Gastrocnemius medialis (tissue), 4 donors: ENCODE measurements at regions of chr12 and their contacts with region 1.

Region 1: DNA sequence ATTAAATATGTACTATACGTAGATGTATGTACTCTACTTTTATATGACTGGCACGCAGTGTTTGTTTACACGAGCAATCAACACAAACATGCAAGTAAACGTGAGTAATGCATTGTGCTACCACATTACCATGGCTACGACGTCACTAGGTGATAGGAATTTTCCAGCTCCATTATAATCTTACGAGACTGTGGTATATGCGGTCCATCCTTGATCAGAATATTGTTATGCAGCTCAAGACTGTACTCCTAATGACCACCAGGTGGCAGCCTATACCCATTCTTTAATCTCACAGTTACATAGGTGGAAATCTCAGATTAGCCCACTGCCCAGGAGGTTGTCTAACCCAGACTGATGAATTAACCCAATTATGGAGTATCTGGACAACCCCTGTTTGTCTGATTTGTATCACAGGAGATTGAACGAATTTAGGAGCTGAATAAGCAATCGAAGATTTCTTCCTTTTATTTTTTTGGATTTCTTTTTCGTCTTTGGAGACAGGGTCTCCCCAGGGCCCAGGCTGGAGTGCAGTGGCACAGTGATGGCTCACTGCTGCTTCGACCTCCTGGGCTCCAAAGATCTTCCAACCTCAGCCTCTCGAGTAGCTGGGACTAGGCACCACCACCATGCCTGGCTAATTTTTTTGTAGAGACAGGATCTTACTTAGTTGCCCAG is 8.7 kb upstream of the TESPA1 start:
- DNase-seq: peak in 1 of 2 donors; percentile 15
- ATAC-seq: peak; percentile 77 to 78
- H3K4me3 ChIP-seq: no peak overlapping the region
- H3K27ac ChIP-seq: no peak overlapping the region
- H3K4me1 ChIP-seq: peaks cover 0 to 4% of the 10 kb centered on the region in 2 donors
- H3K27me3 ChIP-seq: no peaks in the 10 kb centered on the region
- CTCF ChIP-seq: peak; percentile 72 to 87 (median 81)
- POLR2A ChIP-seq: no peak

Region 2: GRCh38 chr12:55073043-55074022 is 80.0 kb after region 1 on chr12:
- in situ Hi-C with region 1: loop called (anchors 5 kb)
- intact Hi-C with region 1: loop called (anchors 1 kb)
- DNase-seq: peak; percentile 30 to 34
- ATAC-seq: peak in 1 of 2 donors; percentile 41
- H3K4me3 ChIP-seq: no peak overlapping the region
- H3K27ac ChIP-seq: no peak overlapping the region
- H3K4me1 ChIP-seq: no peaks in the 10 kb centered on the region
- H3K27me3 ChIP-seq: no peaks in the 10 kb centered on the region
- CTCF ChIP-seq: peak; percentile 63 to 88 (median 68)
- POLR2A ChIP-seq: no peak

Region 3: GRCh38 chr12:55142669-55143565 is 149.6 kb after region 1 on chr12:
- in situ Hi-C with region 1: loop called in 1 of 4 experiments (anchors 10 kb)
- intact Hi-C with region 1: no loop called
- DNase-seq: no peak
- ATAC-seq: no peak
- H3K4me3 ChIP-seq: no peak overlapping the region
- H3K27ac ChIP-seq: no peak overlapping the region
- H3K4me1 ChIP-seq: no peaks in the 10 kb centered on the region
- H3K27me3 ChIP-seq: no peaks in the 10 kb centered on the region
- CTCF ChIP-seq: peak in 2 of 5 experiments; percentile 17 to 40
- POLR2A ChIP-seq: no peak

Region 4: DNA sequence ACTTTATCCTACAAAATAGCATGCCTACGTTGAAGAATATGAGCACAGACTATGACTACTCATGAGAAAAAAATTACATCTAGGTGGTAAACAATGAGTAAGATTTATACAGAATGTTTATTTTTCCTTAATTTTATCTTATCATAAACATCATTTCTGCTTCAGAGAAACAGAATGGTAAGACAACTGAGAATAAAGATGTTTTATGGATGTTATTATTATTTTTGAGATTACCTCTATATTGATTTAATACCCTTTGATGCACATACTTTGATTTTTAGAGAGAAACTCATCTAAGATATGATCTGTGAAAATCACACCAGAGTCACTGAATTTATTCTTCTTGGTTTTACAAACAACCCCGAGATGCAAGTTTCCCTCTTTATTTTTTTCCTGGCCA is 227.4 kb after region 1 on chr12 and contains the start of gene OR10A7:
- in situ Hi-C with region 1: no loop called
- intact Hi-C with region 1: no loop called
- DNase-seq: no peak
- ATAC-seq: no peak
- H3K4me3 ChIP-seq: no peak within 1 kb of the TSS
- H3K27ac ChIP-seq: no peak within 1 kb of the TSS
- H3K4me1 ChIP-seq: no peaks in the 10 kb centered on the region
- H3K27me3 ChIP-seq: no peaks in the 10 kb centered on the region
- CTCF ChIP-seq: no peak
- POLR2A ChIP-seq: no peak
- total RNA-seq, gene OR10A7: not detected